Heart left ventricle (tissue), 16 donors: ENCODE measurements at regions of chr22 and their contacts with region 1.

Region 1: DNA sequence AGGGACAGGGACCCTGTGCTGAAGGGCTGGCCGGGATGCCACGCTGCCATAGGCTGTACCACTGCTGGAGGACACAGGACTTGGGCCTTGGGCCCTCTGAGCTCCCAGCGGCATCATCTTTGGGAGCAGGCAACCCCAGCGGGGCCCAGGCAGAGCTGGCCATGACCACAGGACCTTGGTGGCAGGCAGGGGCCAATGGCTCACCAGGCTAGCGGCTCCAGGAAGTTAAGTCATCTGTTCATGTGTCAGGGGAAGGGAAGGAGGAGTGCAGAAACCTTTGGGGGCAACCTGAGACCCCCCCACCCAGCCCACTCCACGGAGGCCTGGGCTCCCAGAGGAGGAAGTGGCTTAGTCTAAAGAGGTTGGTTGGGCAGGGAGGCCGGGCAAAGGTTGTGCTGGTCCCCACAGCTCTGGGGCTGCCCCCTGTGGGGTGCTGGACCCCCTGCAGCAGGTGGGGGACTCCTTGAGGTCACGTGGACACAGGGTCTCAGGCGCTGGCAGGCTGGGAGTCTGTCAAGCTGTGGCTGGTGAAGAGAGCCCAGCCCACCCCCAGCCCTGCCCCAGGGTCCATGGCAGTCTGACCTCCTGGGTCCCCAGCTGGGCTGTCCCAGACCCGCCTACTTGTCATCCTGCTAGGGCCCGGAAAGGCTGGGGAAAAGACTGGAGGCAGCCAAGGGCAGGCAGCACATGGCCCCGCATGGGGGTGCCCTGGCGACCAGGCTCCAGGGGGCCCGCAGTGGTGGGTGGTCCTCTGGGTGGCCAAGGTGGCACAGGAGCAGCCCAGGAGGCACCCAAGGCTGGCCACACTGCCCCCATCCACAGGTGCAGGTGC is 184.3 kb downstream of the IGLL1 start:
- DNase-seq: no peak
- ATAC-seq: no peak
- H3K4me3 ChIP-seq: no peak overlapping the region
- H3K27ac ChIP-seq: no peak overlapping the region
- H3K4me1 ChIP-seq: no peaks in the 10 kb centered on the region
- H3K27me3 ChIP-seq: no peaks in the 10 kb centered on the region
- CTCF ChIP-seq: no peak
- POLR2A ChIP-seq: no peak

Region 2: DNA sequence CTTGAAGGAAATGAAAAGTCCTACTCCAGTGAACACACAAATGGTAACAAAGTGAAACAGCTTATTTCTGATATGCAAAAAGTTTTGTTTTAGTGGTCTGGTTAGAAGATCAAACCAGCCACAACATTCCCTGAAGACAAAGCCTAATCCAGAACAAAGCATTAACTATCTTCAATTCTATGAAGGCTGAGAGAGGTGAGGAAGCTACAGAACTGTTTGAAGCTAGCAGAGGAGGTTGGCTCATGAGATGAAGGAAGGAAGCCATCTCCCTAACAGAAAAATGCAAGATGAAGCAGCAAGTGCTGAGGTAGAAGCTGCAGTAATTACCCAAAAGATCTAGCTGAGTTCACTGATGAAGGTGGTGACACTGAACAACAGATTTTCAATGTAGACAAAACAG is 16.0 kb after region 1 on chr22:
- intact Hi-C with region 1: loop called in 1 of 10 experiments (anchors 2 kb)
- DNase-seq: no peak
- ATAC-seq: no peak
- H3K4me3 ChIP-seq: no peak overlapping the region
- H3K27ac ChIP-seq: no peak overlapping the region
- H3K4me1 ChIP-seq: no peaks in the 10 kb centered on the region
- H3K27me3 ChIP-seq: peaks cover 0 to 8% (median 0%) of the 10 kb centered on the region in 9 donors
- CTCF ChIP-seq: no peak
- POLR2A ChIP-seq: no peak